ENCODE measurements at regions of chr7 and their contacts with region 1.

Region 1: DNA sequence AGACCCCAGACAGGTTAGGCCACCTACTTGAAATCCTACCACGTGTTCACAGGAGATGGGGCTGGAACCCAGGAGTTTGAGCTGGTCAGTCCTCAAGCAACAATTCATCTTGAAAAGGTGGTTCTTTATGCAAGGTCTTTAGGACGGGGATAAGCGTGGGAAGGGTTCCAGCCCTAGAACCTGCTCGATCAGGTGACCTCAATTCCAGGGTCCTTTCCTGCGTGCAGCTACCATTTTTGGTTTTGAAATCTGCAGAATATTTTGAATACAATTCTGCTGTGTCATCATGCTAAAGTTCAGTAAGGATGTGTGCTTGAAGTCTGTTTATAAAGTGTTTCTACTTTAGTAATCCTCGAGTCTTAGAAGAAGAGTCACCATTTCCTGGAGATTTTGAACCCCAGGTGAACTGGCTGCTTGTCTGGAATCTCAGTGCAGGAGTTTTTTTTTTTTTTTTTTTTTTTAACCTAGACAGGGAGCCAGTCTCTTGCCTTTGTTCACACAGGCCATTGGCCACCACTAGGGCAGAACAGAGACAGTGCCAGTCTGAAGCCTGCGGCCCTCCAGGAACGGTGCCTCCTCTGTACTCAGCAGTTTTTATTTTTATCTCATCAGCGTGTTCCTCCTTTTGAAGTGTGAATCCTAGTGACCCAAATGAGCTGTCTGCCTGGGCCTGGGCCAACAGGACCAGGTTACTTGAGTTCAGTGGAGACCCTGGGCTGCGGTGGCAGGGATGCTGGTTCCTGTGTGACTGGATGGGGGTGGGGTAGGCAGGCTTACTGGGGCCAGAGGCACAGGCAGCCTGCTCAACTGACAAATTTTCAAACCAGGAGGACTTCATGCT is 54.6 kb downstream of the EEPD1 start:
- DNase-seq: peak; percentile 67 to 91
- ATAC-seq: peak; percentile 57 to 71
- H3K4me3 ChIP-seq: no peak overlapping the region
- H3K27ac ChIP-seq: peak overlapping the region; percentile 76 to 90 (median 86)
- H3K4me1 ChIP-seq: peaks cover 80 to 96% of the 10 kb centered on the region in 2 donors
- H3K27me3 ChIP-seq: no peaks in the 10 kb centered on the region
- CTCF ChIP-seq: peak; percentile 23 to 53 (median 38)
- POLR2A ChIP-seq: no peak

Region 2: DNA sequence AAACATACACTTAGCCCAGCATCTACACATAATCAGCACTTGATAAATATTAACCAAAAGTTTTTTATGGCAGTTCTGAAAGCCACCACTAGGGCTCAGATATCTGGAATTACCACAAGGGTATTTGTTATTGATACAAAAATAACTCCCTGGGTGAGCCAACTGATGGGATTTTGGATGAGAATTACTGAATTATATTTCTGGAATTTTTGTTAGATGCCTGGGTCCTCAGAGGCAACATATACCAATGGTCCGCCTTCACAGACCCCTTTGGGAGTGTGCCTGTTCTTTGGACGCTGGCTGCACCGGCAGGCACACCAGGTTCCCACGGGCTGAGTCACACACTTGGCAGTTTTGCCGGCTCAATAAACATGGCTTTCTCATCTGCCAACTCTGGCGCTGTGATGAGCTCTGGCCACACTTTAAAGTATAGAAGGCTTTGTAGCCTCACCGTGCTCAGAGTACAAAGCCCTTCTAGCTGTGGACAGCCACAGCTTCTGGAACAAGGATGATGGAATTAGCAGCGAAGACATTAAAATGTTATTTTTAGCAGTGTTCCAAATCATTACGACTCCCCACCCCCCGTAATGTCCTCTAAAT is 79.1 kb before region 1 on chr7:
- in situ Hi-C with region 1: no loop called
- intact Hi-C with region 1: loop called (anchors 1 kb)
- DNase-seq: peak; percentile 87 to 91
- ATAC-seq: peak; percentile 65 to 80
- H3K4me3 ChIP-seq: peak overlapping the region in 2 of 4 donors; percentile 22 to 37
- H3K27ac ChIP-seq: peak overlapping the region; percentile 86 to 98 (median 95)
- H3K4me1 ChIP-seq: peaks cover 50 to 51% of the 10 kb centered on the region in 2 donors
- H3K27me3 ChIP-seq: no peaks in the 10 kb centered on the region
- CTCF ChIP-seq: peak; percentile 86 to 91 (median 88)
- POLR2A ChIP-seq: peak in 1 of 2 donors; percentile 45

Region 3: GRCh38 chr7:36141351-36141750 is 66.3 kb before region 1 on chr7:
- in situ Hi-C with region 1: no loop called
- intact Hi-C with region 1: no loop called
- DNase-seq: no peak
- ATAC-seq: no peak
- H3K4me3 ChIP-seq: no peak overlapping the region
- H3K27ac ChIP-seq: no peak overlapping the region
- H3K4me1 ChIP-seq: peaks cover 8 to 16% of the 10 kb centered on the region in 2 donors
- H3K27me3 ChIP-seq: no peaks in the 10 kb centered on the region
- CTCF ChIP-seq: no peak
- POLR2A ChIP-seq: no peak

Region 4: DNA sequence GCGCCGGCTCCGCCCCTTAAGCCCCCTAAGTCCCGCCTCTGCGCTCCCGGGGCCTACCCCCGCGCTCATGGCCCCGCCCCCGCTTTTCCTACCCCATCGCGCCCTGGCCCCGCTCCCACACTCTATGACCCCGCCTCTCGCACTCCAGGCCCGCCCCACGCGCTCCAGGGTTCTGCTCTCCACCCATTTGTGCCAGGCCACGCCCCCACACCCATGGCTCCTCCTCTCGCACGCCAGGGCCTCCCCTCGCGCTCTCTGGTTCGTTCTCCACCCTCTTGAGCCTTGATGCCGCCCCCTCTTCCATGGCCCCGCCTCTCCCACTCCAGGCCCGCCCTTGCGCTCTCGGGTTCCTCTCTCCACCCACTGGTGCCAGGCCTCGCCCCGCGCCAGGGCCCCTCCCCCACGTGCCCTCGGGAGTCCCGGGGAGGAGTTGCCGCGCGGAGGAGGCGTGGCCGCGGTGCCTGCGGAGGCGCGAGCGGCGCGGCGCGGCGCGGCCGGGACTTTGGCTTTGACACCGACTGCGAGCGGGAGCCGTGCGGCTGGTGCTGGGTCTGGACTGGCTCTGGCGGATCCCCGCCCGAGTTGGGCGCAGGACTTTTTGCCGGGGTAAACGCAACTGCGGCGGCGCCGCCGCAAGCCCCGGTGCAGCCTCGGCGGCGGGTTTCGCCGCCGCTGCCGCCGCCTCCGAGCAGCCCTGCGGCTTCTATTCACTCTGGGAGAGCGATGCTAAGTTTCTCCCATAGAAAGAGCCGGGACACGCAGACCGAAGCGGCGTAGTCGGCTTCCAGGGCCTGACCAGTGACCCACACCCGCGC is 54.7 kb before region 1 on chr7 and contains the start of gene EEPD1:
- in situ Hi-C with region 1: no loop called
- intact Hi-C with region 1: loop called (anchors 1 kb)
- DNase-seq: peak; percentile 100
- ATAC-seq: peak; percentile 71 to 81
- H3K4me3 ChIP-seq: peak within 1 kb of the TSS; percentile 85 to 93 (median 88)
- H3K27ac ChIP-seq: peak within 1 kb of the TSS; percentile 94 to 98 (median 95)
- H3K4me1 ChIP-seq: peaks cover 32 to 37% of the 10 kb centered on the region in 2 donors
- H3K27me3 ChIP-seq: no peaks in the 10 kb centered on the region
- CTCF ChIP-seq: no peak
- POLR2A ChIP-seq: peak; percentile 91 to 96
- total RNA-seq, gene EEPD1: 41.0 to 68.5 (median 61.3) TPM

Region 5: GRCh38 chr7:36280840-36281812 is 73.5 kb after region 1 on chr7:
- in situ Hi-C with region 1: loop called in 1 of 4 experiments (anchors 10 kb)
- intact Hi-C with region 1: loop called (anchors 2 kb)
- DNase-seq: peak; percentile 81 to 82
- ATAC-seq: peak; percentile 81
- H3K4me3 ChIP-seq: peak overlapping the region in 3 of 4 donors; percentile 8 to 18 (median 10)
- H3K27ac ChIP-seq: peak overlapping the region; percentile 86 to 96 (median 94)
- H3K4me1 ChIP-seq: peaks cover 97% of the 10 kb centered on the region in 2 donors
- H3K27me3 ChIP-seq: no peaks in the 10 kb centered on the region
- CTCF ChIP-seq: no peak
- POLR2A ChIP-seq: peak in 1 of 2 donors; percentile 55